HepG2 (cell line): ENCODE measurements at regions of chr22 and their contacts with region 1.

Region 1: DNA sequence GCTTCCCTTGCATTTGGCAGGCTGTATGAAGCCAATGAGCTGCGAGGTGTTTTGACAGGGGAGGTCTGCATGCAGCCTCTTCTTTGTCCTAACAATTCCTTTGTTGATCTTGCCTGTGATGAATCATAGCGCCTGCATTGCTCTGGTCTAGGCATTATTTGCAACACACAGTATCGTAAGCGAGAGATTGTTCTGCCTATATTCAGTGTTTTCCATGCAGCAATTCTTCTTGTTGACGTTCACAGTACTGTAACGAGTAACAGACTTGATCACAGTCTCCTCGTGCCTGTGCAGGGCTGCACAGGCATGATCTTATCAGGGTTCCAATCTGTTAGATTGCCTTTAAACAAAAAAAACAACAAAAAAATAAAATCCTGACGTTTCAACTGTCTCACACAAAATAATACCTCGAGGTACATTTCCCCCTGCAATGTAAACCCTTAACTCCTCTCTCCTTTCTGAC is 13.9 kb upstream of the ADSL start:
- DNase-seq: no peak
- ATAC-seq: no peak
- H3K4me3 ChIP-seq: no peak overlapping the region
- H3K27ac ChIP-seq: no peak overlapping the region
- H3K4me1 ChIP-seq: no peaks in the 10 kb centered on the region
- H3K27me3 ChIP-seq: no peaks in the 10 kb centered on the region
- CTCF ChIP-seq: no peak
- EP300 ChIP-seq: no peak
- POLR2A ChIP-seq: no peak
- RAD21 ChIP-seq: no peak

Region 2: DNA sequence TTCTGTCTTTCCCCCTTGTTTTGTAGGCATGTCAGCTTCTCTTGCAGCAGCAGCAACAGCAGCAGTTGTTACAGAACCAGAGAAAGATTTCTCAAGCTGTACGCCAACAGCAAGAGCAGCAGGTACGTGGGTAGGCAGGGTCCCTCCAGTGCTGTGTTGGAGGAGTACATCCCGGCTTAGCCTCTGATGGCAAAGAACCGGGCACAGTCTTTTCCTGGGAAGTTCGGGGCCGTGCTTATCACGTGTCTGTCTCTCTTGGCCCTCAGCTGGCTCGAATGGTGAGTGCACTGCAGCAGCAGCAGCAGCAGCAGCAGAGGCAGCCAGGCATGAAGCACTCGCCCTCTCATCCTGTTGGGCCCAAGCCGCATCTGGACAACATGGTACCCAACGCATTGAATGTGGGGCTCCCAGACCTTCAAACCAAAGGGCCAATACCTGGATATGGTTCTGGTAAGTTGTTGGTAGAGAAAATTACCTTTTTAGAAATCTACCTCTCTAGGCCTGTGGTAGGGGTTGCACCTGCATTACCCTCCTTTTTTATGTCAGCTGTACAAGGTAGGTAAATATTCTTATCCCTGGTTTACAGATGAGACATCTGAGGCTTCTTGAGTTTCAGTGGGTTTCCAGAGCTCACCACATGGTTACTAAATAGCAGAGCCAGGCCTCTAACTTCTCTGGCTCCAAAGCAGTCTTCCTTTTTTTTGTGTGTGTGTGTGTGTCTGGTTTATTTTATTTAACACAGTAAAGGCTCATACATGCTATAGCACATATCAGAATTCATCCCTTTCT is 31.3 kb before region 1 on chr22:
- CTCF ChIA-PET with region 1: no interaction called
- POLR2A ChIA-PET with region 1: no interaction called
- in situ Hi-C with region 1: no loop called
- intact Hi-C with region 1: loop called (anchors 1 kb)
- DNase-seq: no peak
- ATAC-seq: no peak
- H3K4me3 ChIP-seq: no peak overlapping the region
- H3K27ac ChIP-seq: no peak overlapping the region
- H3K4me1 ChIP-seq: no peaks in the 10 kb centered on the region
- H3K27me3 ChIP-seq: no peaks in the 10 kb centered on the region
- CTCF ChIP-seq: no peak
- EP300 ChIP-seq: no peak
- POLR2A ChIP-seq: no peak
- RAD21 ChIP-seq: no peak

Region 3: GRCh38 chr22:40396882-40397281 is 64.5 kb after region 1 on chr22:
- CTCF ChIA-PET with region 1: no interaction called
- POLR2A ChIA-PET with region 1: no interaction called
- in situ Hi-C with region 1: no loop called
- intact Hi-C with region 1: no loop called
- DNase-seq: no peak
- ATAC-seq: no peak
- H3K4me3 ChIP-seq: no peak overlapping the region
- H3K27ac ChIP-seq: no peak overlapping the region
- H3K4me1 ChIP-seq: no peaks in the 10 kb centered on the region
- H3K27me3 ChIP-seq: no peaks in the 10 kb centered on the region
- CTCF ChIP-seq: no peak
- EP300 ChIP-seq: no peak
- POLR2A ChIP-seq: no peak
- RAD21 ChIP-seq: no peak